CD4-positive, alpha-beta T cell (primary cell): ENCODE measurements at regions of chr20 and their contacts with region 1.

Region 1: GRCh38 chr20:32357869-32358631 is at the start of gene ASXL1:
- DNase-seq: peak; percentile 87 to 97 (median 92)
- ATAC-seq: peak; percentile 91
- H3K4me3 ChIP-seq: peak within 1 kb of the TSS; percentile 95
- H3K4me3 Mint-ChIP-seq: peak within 1 kb of the TSS; percentile 96
- H3K27ac ChIP-seq: peak within 1 kb of the TSS; percentile 96 to 97
- H3K27ac Mint-ChIP-seq: peak within 1 kb of the TSS; percentile 99
- H3K4me1 ChIP-seq: peaks cover 38% of the 10 kb centered on the region
- H3K4me1 Mint-ChIP-seq: peaks cover 51% of the 10 kb centered on the region
- H3K27me3 ChIP-seq: no peaks in the 10 kb centered on the region
- H3K27me3 Mint-ChIP-seq: no peaks in the 10 kb centered on the region
- CTCF ChIP-seq: no peak
- total RNA-seq, gene ASXL1: 213 to 222 TPM

Region 2: DNA sequence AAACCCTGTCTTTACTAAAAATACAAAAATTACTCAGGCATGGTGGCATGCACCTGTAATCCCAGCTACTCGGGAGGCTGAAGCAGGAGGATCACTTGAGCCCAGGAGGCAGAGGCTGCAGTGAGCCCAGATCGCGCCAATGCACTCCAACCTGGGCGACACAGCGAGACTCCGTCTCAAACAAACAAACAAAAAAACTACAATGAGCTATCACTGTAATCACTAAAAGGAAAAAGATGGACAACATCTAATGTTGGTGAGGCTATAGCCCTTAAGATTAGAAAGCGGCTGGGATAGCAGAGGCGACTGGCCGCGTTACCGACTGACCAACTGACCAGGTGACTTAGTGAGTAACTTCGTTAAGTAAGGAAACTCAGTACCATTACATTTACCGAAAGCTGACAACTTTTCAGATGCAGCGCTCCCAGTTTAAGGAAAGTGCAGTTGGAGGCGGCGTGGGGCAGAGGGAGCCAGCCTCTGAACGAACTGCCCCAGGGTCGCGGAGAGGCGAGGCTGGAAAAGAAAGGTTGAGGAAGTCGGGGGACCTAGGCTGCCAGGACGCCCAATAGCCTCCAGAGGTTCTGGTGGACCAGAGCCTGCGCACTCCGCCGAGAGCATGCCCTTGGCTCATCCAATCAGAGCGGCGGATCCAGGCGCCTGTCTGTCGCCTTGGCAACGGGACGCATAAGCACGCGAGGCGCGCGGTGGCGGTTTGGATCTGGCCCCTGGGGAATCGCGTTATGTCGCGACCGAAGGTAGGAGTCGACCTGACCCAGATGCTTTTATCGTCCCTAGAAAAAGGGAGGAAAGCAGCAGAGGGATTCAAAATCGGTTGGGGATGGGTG is 478.7 kb before region 1 on chr20:
- CTCF ChIA-PET with region 1: no interaction called
- POLR2A ChIA-PET with region 1: no interaction called
- intact Hi-C with region 1: loop called in 1 of 2 experiments (anchors 5 kb)
- DNase-seq: peak; percentile 53 to 93 (median 66)
- ATAC-seq: peak; percentile 88
- H3K4me3 ChIP-seq: peak overlapping the region; percentile 69
- H3K4me3 Mint-ChIP-seq: peak overlapping the region; percentile 92
- H3K27ac ChIP-seq: no peak overlapping the region
- H3K27ac Mint-ChIP-seq: peak overlapping the region; percentile 48
- H3K4me1 ChIP-seq: peaks cover 15% of the 10 kb centered on the region
- H3K4me1 Mint-ChIP-seq: peaks cover 12% of the 10 kb centered on the region
- H3K27me3 ChIP-seq: peaks cover 0 to 1% of the 10 kb centered on the region in 2 experiments
- H3K27me3 Mint-ChIP-seq: peaks cover 18% of the 10 kb centered on the region
- CTCF ChIP-seq: no peak

Region 3: DNA sequence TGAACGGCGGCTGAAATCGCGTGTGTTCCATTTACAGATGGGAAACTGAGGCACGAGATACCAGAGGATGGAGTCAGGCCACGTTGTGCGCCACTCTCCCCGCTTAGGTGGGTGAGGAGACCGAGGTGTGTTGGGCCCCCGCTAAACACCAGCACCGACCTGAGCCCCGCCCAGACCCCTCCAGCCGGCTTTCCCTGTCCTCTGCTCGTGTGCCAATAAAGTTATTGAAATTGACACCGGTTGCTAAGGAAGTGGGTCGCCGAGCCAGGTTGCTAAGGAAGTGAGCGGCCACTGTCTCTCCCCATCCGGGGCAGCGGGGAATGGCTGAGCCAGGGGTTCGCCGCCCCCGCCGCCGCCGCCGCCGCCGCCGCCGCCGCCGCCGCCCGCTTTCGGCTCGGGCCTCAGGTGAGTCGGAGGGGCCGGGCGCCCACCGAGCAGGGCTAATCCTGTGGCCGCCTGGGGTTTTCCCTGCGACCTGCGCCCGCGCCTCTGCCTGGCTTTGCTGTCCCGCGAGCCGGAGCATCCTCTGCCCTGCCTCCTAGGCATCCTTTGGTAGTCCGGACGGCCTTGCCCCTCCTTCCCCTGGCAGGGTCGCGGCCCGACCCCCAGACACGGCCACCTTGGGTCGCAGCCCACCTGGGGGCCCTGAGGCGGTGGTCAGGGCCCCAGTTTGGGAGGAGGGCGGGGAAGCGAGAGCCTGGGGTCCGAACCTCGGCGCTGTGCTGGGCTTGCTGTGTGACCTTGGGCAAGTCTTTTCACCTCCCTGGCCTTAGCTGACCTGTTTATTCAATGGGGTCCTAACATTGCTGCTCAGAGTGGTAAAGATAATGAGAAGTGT is 80.5 kb before region 1 on chr20 and contains the start of gene KIF3B:
- CTCF ChIA-PET with region 1: no interaction called
- POLR2A ChIA-PET with region 1: interaction called, 3 read pairs
- intact Hi-C with region 1: loop called (anchors 2 to 10 kb)
- DNase-seq: peak; percentile 67 to 94 (median 80)
- ATAC-seq: peak; percentile 88
- H3K4me3 ChIP-seq: peak within 1 kb of the TSS; percentile 95
- H3K4me3 Mint-ChIP-seq: peak within 1 kb of the TSS; percentile 92
- H3K27ac ChIP-seq: peak within 1 kb of the TSS; percentile 76 to 88
- H3K27ac Mint-ChIP-seq: peak within 1 kb of the TSS; percentile 85
- H3K4me1 ChIP-seq: peaks cover 27% of the 10 kb centered on the region
- H3K4me1 Mint-ChIP-seq: peaks cover 46% of the 10 kb centered on the region
- H3K27me3 ChIP-seq: no peaks in the 10 kb centered on the region
- H3K27me3 Mint-ChIP-seq: no peaks in the 10 kb centered on the region
- CTCF ChIP-seq: no peak
- total RNA-seq, gene KIF3B: 7.3 TPM

Region 4: DNA sequence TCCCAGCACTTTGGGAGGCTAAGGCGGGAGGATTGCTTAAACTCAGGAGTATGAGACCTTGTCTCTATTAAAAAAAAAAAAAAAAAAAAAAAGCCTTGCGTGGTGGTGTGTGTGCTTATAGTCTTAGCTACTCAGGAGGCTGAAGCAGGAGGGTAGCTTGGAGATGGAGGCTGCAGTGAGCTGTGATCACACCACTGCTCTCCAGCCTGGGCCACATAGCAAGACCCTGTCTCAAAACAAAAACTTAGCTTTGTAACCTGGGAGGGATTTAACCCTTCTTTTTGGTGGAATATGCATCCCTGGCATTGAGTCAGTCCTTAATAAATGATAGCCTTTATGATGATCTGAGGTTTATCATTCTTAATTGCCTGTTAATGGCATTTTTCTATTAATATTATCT is 12.8 kb after region 1 on chr20:
- CTCF ChIA-PET with region 1: interaction called, 5 read pairs
- POLR2A ChIA-PET with region 1: interaction called, 10 read pairs
- intact Hi-C with region 1: no loop called
- DNase-seq: no peak
- ATAC-seq: no peak
- H3K4me3 ChIP-seq: no peak overlapping the region
- H3K4me3 Mint-ChIP-seq: no peak overlapping the region
- H3K27ac ChIP-seq: no peak overlapping the region
- H3K27ac Mint-ChIP-seq: no peak overlapping the region
- H3K4me1 ChIP-seq: peaks cover 8% of the 10 kb centered on the region
- H3K4me1 Mint-ChIP-seq: peaks cover 33% of the 10 kb centered on the region
- H3K27me3 ChIP-seq: no peaks in the 10 kb centered on the region
- H3K27me3 Mint-ChIP-seq: no peaks in the 10 kb centered on the region
- CTCF ChIP-seq: no peak

Region 5: GRCh38 chr20:32406701-32407100 is 48.7 kb after region 1 on chr20:
- CTCF ChIA-PET with region 1: interaction called, 5 read pairs
- POLR2A ChIA-PET with region 1: interaction called, 23 read pairs
- intact Hi-C with region 1: loop called (anchors 1 to 5 kb)
- DNase-seq: no peak
- ATAC-seq: no peak
- H3K4me3 ChIP-seq: no peak overlapping the region
- H3K4me3 Mint-ChIP-seq: peak overlapping the region; percentile 1
- H3K27ac ChIP-seq: peak overlapping the region; percentile 7 to 43
- H3K27ac Mint-ChIP-seq: peak overlapping the region; percentile 83
- H3K4me1 ChIP-seq: peaks cover 35% of the 10 kb centered on the region
- H3K4me1 Mint-ChIP-seq: peaks cover 73% of the 10 kb centered on the region
- H3K27me3 ChIP-seq: no peaks in the 10 kb centered on the region
- H3K27me3 Mint-ChIP-seq: no peaks in the 10 kb centered on the region
- CTCF ChIP-seq: no peak

Region 6: DNA sequence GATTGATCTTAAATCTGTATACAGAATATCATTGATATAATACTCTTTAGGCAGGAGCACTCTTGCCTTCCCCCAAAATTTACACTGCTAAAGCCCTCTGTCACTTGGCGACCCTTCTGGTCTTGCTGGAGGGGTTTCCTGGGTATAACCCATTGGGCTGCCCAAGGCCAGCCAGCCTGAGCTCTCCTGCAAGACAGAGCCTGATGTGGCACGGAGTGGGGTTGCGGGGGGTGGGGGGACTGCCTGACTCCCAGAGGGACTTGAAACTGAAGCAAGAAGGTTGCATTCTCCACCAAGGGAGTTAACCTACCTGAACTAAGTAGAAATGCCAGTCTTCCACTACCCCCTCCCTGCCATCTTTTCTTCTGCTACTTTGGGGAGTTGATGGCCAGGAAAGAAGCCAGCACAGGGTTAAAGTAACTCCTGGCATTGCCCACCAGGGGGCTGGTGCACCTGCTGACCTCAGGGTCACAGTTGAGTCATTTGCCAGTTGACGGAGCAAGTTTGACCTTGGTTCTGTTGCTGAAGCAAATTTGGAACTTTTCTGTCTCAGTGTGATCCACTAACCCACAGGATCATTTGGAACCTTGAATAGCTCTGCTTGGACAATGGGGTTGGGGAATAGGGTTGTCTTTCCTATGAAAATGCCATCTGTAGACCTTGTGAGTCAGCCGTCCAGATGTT is 79.5 kb after region 1 on chr20:
- CTCF ChIA-PET with region 1: no interaction called
- POLR2A ChIA-PET with region 1: no interaction called
- intact Hi-C with region 1: no loop called
- DNase-seq: peak in 5 of 14 experiments; percentile 16 to 56 (median 45)
- ATAC-seq: peak; percentile 30
- H3K4me3 ChIP-seq: no peak overlapping the region
- H3K4me3 Mint-ChIP-seq: no peak overlapping the region
- H3K27ac ChIP-seq: no peak overlapping the region
- H3K27ac Mint-ChIP-seq: no peak overlapping the region
- H3K4me1 ChIP-seq: no peaks in the 10 kb centered on the region
- H3K4me1 Mint-ChIP-seq: peaks cover 7% of the 10 kb centered on the region
- H3K27me3 ChIP-seq: no peaks in the 10 kb centered on the region
- H3K27me3 Mint-ChIP-seq: no peaks in the 10 kb centered on the region
- CTCF ChIP-seq: peak; percentile 21

Region 7: DNA sequence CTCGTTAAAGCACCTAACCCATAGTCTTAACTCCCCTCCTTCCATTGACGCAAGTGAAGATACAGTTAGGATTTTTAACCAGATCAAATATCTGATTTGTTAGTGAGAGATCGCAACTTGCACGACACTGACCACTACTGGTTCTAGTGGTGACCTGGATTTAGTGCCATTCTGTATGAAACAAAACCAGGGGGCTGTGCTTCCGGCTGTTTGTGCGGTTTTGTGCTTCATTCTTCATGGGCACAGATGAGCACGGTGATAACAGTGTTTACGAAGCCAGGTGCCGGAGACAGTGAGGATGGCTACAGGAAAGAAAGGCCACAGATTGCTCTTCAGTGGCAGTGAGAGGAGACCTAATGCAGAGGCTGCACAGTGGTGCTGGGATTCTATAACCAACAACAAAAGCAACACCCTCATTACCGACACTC is 151.6 kb after region 1 on chr20:
- CTCF ChIA-PET with region 1: no interaction called
- POLR2A ChIA-PET with region 1: interaction called, 17 read pairs
- intact Hi-C with region 1: no loop called
- DNase-seq: peak; percentile 51 to 89 (median 67)
- ATAC-seq: peak; percentile 83
- H3K4me3 ChIP-seq: peak overlapping the region; percentile 60
- H3K4me3 Mint-ChIP-seq: peak overlapping the region; percentile 88
- H3K27ac ChIP-seq: peak overlapping the region; percentile 75 to 83
- H3K27ac Mint-ChIP-seq: peak overlapping the region; percentile 96
- H3K4me1 ChIP-seq: peaks cover 85% of the 10 kb centered on the region
- H3K4me1 Mint-ChIP-seq: peaks cover 83% of the 10 kb centered on the region
- H3K27me3 ChIP-seq: no peaks in the 10 kb centered on the region
- H3K27me3 Mint-ChIP-seq: no peaks in the 10 kb centered on the region
- CTCF ChIP-seq: peak; percentile 17

Region 8: DNA sequence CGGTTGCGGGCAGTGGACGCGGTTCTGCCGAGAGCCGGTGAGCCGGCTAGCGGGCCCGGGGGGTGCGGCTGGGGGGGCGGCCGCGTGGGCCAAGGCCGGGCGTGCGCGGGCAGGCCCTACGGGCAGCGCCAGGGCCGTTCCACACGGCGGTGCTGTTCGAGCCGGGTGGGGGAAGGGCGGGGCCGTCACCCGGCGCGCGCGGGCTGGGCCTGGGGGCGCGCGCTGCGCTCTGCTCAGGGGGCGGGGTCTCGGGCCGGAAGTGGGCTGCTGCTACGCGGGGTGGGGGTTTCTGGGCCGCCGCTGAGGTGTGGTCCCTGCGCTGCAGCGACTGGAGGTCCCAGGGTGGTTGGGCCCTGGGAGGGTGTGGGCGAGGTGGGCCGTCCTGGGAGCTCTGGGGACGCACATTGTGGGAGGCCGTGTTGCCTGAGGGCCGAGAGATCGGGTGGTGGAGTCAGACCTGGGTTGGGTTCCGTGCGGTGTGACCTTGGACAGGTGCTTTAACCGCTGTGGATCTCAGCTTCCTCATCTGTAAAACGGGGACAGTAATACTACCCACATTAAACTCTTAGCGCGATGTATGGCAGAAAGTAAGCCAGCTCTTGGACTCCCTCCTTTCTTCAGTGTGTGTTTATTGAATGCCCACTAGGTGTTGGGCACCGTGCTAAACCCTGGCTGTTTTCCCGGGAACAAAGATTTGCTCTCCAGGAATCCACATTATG is 462.1 kb after region 1 on chr20:
- CTCF ChIA-PET with region 1: no interaction called
- POLR2A ChIA-PET with region 1: no interaction called
- intact Hi-C with region 1: loop called in 1 of 2 experiments (anchors 5 kb)
- DNase-seq: peak in 13 of 14 experiments; percentile 55 to 93 (median 85)
- ATAC-seq: peak; percentile 72
- H3K4me3 ChIP-seq: peak overlapping the region; percentile 75
- H3K4me3 Mint-ChIP-seq: peak overlapping the region; percentile 99
- H3K27ac ChIP-seq: peak overlapping the region; percentile 77 to 91
- H3K27ac Mint-ChIP-seq: peak overlapping the region; percentile 98
- H3K4me1 ChIP-seq: peaks cover 50% of the 10 kb centered on the region
- H3K4me1 Mint-ChIP-seq: peaks cover 44% of the 10 kb centered on the region
- H3K27me3 ChIP-seq: no peaks in the 10 kb centered on the region
- H3K27me3 Mint-ChIP-seq: no peaks in the 10 kb centered on the region
- CTCF ChIP-seq: no peak